ENCODE measurements at regions of chr10 and their contacts with region 1.

Region 1: GRCh38 chr10:132223156-132223590 is 36.4 kb downstream of the DPYSL4 start:
- DNase-seq: peak; percentile 75
- ATAC-seq: peak; percentile 98
- H3K4me3 ChIP-seq: no peak overlapping the region
- H3K27ac ChIP-seq: no peak overlapping the region
- H3K4me1 ChIP-seq: no peaks in the 10 kb centered on the region
- H3K27me3 ChIP-seq: no peaks in the 10 kb centered on the region
- CTCF ChIP-seq: peak; percentile 99
- EP300 ChIP-seq: no peak
- POLR2A ChIP-seq: no peak
- RAD21 ChIP-seq: peak; percentile 99

Region 2: DNA sequence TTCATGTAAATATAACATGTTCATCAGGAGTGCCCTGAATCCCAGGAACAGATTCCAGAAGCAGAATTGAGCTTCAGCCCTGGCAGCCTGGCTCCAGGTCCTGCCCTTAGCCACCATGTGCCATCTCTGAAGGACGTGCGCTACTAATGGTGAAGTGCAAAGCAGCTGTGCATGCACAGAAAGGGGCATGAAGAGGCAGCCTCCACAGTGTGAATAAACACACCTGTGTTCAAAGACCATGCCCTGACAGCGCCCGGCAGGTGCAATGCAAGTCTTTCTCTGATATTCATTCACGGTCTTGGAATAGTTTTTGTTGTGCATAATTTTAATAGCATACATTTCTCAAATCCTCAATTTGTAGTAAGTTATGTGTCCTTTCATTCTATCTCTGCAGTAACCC is 661.3 kb before region 1 on chr10:
- CTCF ChIA-PET with region 1: no interaction called
- POLR2A ChIA-PET with region 1: no interaction called
- in situ Hi-C with region 1: no loop called
- intact Hi-C with region 1: no loop called
- DNase-seq: no peak
- ATAC-seq: no peak
- H3K4me3 ChIP-seq: no peak overlapping the region
- H3K27ac ChIP-seq: no peak overlapping the region
- H3K4me1 ChIP-seq: no peaks in the 10 kb centered on the region
- H3K27me3 ChIP-seq: peaks cover 2 to 23% of the 10 kb centered on the region in 2 experiments; a peak in 4 of 5 replicates
- CTCF ChIP-seq: no peak
- EP300 ChIP-seq: no peak
- POLR2A ChIP-seq: no peak
- RAD21 ChIP-seq: no peak

Region 3: DNA sequence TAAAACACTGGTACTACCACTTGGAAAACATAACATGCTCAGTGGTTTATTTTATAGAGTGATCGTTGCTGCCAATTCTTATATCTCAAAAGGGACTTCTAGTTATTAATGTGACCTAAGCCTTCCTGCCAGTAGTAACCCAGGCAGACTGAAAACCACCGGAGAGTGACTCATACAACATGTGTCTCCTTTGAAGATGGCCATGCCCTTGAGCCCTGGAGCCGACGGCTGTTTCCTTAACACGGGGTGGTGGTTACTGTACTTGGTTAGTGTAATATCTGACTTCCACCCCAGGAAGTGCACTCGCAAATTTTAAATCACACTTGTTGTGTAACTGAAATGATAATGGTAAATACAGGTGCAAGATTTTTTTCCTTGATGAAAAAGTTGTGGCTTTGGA is 127.0 kb before region 1 on chr10:
- CTCF ChIA-PET with region 1: no interaction called
- POLR2A ChIA-PET with region 1: no interaction called
- in situ Hi-C with region 1: no loop called
- intact Hi-C with region 1: no loop called
- DNase-seq: peak; percentile 60
- ATAC-seq: peak; percentile 76
- H3K4me3 ChIP-seq: no peak overlapping the region
- H3K27ac ChIP-seq: no peak overlapping the region
- H3K4me1 ChIP-seq: peaks cover 45% of the 10 kb centered on the region
- H3K27me3 ChIP-seq: peaks cover 0 to 14% of the 10 kb centered on the region in 2 experiments; a peak in 1 of 5 replicates
- CTCF ChIP-seq: no peak
- EP300 ChIP-seq: no peak
- POLR2A ChIP-seq: no peak
- RAD21 ChIP-seq: no peak

Region 4: DNA sequence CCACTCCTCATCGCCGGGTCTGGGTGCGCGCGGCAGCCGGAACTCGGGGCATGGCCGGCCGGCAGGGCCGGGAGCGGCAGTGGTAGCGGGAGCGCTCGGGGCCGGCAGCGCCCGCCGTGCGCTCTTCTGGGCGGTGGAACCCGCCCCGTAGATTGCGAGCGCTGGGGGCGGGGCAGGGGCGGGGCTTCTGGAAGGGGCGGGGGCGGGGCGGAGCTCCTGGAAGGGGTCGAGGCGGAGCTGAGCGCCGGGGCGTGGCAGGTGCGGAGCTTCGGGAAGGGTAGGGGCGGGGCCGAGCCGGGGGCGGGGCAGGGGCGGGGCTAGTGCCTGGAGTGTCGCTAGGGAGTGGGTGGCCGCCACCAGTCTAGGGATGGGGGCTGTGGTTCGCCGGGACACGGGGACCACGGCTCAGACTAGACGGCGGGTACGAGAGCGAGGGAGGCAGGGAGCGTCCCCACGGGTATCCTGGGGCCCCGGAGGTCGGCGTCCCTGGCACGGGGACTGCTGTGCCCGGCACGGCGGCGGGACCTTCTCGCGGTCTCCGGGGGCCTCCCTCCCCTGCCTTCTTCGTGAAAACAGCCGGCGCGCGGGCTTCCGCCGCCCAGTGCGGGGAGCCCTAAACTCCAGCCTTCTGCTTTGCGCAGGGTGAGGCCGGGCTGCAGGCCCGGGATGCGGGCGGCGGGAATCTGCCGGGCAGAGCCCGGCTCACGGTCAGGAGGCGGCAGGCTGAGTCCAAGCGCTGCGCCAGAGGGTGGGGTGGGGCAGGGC is 84.8 kb after region 1 on chr10 and contains the start of gene STK32C:
- CTCF ChIA-PET with region 1: interaction called, 3 read pairs
- POLR2A ChIA-PET with region 1: interaction called, 3 read pairs
- in situ Hi-C with region 1: no loop called
- intact Hi-C with region 1: loop called (anchors 1 kb)
- DNase-seq: peak; percentile 68
- ATAC-seq: peak; percentile 68
- H3K4me3 ChIP-seq: peak within 1 kb of the TSS; percentile 65 to 88 (median 71)
- H3K27ac ChIP-seq: no peak within 1 kb of the TSS
- H3K4me1 ChIP-seq: peaks cover 49% of the 10 kb centered on the region
- H3K27me3 ChIP-seq: peaks cover 0 to 12% of the 10 kb centered on the region in 2 experiments; a peak in 2 of 5 replicates
- CTCF ChIP-seq: 0 out of 2 replicates have a peak, but pooled peaks have one; percentile 9
- EP300 ChIP-seq: no peak
- POLR2A ChIP-seq: peak in 1 of 2 experiments; percentile 62; a peak in 2 of 4 replicates
- RAD21 ChIP-seq: no peak
- total RNA-seq, gene STK32C: 18.9 and 19.4 TPM in 2 replicates

Region 5: DNA sequence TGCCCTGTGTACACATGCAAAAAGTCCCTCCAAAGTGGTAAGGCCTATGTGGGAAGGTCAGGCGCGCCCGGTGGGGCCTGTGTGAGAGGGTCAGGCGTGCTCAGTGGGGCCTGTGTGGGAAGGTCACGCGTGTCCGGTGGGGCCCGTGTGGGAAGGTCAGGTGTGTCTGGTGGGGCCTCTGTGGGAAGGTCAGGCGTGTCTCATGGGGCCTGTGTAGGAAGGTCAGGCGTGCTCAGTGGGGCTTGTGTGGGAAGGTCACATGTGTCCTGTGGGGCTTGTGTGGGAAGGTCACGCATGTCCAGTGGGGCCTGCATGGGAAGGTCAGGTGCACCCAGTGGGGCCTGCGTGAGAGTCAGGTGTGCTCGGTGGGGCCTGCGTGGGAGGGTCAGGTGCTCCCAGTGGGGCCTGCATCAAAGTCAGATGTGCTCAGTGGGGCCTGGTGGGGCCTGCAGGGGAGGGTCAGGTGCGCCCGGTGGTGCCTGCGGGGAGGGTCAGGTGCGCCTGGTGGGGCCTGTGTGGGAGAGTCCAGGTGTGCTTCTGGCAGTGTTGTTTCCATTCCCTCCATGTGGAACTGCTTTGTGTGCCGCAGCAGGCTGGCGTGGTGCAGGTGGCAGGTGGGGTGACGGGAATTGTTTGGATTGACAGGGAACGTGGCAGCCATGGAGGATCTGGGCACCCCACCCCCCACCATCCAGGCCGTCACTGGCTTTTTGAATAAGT is 124.2 kb after region 1 on chr10:
- CTCF ChIA-PET with region 1: interaction called, 50 read pairs
- POLR2A ChIA-PET with region 1: no interaction called
- in situ Hi-C with region 1: loop called (anchors 5 kb)
- intact Hi-C with region 1: no loop called
- DNase-seq: no peak
- ATAC-seq: no peak
- H3K4me3 ChIP-seq: no peak overlapping the region
- H3K27ac ChIP-seq: no peak overlapping the region
- H3K4me1 ChIP-seq: peaks cover 18% of the 10 kb centered on the region
- H3K27me3 ChIP-seq: no peaks in the 10 kb centered on the region
- CTCF ChIP-seq: no peak
- EP300 ChIP-seq: no peak
- POLR2A ChIP-seq: no peak
- RAD21 ChIP-seq: no peak

Region 6: DNA sequence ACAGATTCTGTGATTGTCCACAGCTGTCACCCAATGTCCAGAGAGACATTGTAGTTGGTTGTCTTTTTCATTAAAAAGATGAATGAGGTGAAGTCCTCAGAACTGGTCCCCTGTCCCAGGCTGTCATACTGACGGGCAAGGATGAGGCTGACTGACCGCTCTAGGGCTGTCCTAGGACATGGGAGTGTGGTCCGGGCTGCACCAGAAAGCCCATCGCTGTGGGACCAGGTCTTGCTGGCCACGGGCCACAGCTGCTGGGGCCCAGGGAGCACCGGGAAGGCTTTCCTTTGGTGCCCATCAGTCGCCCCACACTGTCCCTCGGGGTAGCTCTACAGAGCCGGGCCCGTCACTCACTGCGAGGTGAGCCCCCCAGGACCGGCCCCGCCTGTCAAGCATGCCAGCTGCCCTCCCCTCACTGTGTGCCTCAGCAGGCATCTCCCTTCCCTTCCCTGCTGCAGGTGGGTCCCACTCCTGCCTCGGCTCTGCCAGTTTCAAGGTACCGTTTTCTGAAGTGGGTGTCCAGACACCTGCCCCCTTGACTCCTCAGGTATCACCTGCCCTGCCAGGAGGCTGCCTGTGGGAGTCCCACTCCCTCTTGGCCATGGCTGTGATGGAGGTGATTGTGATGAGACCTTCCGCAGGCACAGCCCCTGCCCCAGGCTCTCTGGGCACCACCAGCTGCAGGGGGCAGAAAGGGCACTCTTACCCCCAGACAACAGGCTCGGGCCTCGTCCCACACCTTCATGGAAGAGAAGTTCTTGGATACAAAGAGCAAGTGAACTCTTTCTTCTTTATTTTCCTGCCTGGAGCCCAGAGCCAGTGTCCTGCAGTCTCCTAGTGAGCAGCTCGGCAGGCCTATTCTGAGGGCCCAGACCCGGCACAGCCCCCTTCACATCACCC is 130.5 kb after region 1 on chr10:
- CTCF ChIA-PET with region 1: interaction called, 50 read pairs
- POLR2A ChIA-PET with region 1: no interaction called
- in situ Hi-C with region 1: loop called (anchors 5 kb)
- intact Hi-C with region 1: no loop called
- DNase-seq: no peak
- ATAC-seq: no peak
- H3K4me3 ChIP-seq: no peak overlapping the region
- H3K27ac ChIP-seq: no peak overlapping the region
- H3K4me1 ChIP-seq: no peaks in the 10 kb centered on the region
- H3K27me3 ChIP-seq: no peaks in the 10 kb centered on the region
- CTCF ChIP-seq: no peak
- EP300 ChIP-seq: no peak
- POLR2A ChIP-seq: no peak
- RAD21 ChIP-seq: no peak

Region 7: GRCh38 chr10:132452631-132453469 is 229.7 kb after region 1 on chr10:
- CTCF ChIA-PET with region 1: interaction called, 10 read pairs
- POLR2A ChIA-PET with region 1: no interaction called
- in situ Hi-C with region 1: loop called (anchors 5 kb)
- intact Hi-C with region 1: loop called (anchors 2 kb)
- DNase-seq: peak; percentile 49
- ATAC-seq: peak; percentile 57
- H3K4me3 ChIP-seq: peak overlapping the region; percentile 36 to 51 (median 41); a peak in 5 of 6 replicates
- H3K27ac ChIP-seq: no peak overlapping the region
- H3K4me1 ChIP-seq: peaks cover 72% of the 10 kb centered on the region
- H3K27me3 ChIP-seq: peaks cover 0 to 3% of the 10 kb centered on the region in 2 experiments; a peak in 1 of 5 replicates
- CTCF ChIP-seq: peak; percentile 88
- EP300 ChIP-seq: 0 out of 4 replicates have a peak, but pooled peaks of 1 of the 2 experiments have one; percentile 20
- POLR2A ChIP-seq: no peak
- RAD21 ChIP-seq: peak; percentile 94